Heart right ventricle (tissue), 16 donors: ENCODE measurements at regions of chr2 and their contacts with region 1.

Region 1: DNA sequence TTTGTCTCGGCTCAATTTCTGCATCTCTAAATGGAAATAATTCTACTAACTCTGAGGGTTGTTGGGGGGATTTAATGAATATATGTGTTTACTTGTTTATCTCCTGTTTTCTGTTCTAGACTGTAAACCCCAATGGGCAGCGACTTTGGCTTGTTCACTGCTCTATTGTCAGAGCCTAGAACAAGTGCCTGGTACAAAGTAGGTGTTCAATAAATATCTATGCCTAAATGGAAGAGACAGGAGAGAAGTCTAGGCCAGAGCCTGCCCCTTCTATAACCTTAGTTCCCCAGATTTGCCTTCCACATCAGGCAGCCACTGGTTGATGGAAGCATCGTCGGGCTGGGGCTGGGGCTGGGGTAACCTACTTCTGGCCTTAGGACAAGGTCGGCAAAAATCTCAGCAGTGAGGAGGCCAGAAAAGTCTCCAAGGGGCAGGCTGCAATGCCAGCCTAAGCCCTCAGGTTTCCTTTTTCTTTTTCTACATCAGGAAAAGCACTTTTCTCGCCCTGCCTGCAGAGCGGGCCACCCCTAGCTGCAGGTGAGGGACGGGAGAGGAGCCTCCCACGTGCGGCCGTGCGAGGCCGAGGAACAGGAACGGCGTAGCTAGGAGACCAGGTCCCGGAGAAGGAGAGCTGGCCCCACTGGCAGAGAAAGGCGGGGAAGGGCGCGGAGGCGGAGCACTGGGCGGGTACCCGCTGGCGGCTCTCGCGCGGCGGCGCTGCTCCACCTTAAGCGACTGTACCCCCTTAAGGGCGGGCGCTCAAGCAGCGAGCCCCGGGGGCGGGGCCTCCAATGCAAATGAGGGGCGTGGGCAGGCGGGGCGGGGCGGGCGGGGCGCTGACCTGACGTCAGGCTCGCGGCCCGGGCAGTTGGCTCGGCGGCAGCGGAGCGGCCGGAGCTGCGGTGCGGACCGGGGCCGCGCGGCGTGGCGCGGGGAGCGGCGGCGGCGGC is at the start of gene CNNM4:
- DNase-seq: peak; percentile 92 to 95
- ATAC-seq: peak; percentile 93 to 96 (median 96)
- H3K4me3 ChIP-seq: peak within 1 kb of the TSS; percentile 57 to 88 (median 68)
- H3K27ac ChIP-seq: peak within 1 kb of the TSS; percentile 31 to 85 (median 80)
- H3K4me1 ChIP-seq: peaks cover 8 to 46% (median 42%) of the 10 kb centered on the region in 9 donors
- H3K27me3 ChIP-seq: no peaks in the 10 kb centered on the region
- CTCF ChIP-seq: peak in 1 of 9 donors; percentile 14
- total RNA-seq, gene CNNM4: 19.1 to 59.7 (median 34.8) TPM

Region 2: DNA sequence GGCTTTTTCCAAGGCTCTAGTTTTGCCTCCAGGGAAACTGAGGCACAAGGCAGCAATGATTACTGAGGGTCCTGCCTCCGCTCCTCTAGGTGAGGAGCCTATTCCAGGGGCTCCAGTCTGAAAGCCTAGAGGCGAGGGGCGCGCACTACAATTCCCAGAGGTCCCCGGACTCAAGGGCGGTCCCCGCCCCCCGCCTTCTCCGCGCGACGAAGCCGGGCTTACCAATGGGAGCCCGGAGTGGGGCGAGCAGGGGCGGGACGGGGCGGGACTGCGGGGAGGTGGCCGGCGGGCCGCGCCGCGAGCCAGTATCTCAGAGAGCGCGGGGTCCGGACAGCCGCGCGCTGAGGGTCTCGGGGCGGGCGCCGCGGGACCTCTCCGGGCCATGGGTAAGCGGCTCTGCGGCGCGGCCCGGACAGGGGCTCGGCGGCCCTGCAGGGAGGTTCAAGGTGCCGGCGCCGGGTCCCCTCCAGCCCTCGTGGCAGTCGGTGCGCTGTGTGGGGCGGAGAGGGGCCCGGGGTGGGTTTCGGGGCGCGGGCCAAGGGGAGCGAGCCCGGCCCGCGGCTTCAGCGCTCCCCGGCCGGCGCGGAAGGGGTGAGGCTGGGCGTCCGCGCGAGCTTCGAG is 223.8 kb before region 1 on chr2 and contains the start of gene ARID5A:
- intact Hi-C with region 1: loop called in 1 of 10 experiments (anchors 10 kb)
- DNase-seq: peak; percentile 95 to 96
- ATAC-seq: peak; percentile 69 to 88 (median 76)
- H3K4me3 ChIP-seq: peak within 1 kb of the TSS; percentile 73 to 99 (median 96)
- H3K27ac ChIP-seq: peak within 1 kb of the TSS; percentile 68 to 100 (median 97)
- H3K4me1 ChIP-seq: peaks cover 29 to 89% (median 76%) of the 10 kb centered on the region in 9 donors
- H3K27me3 ChIP-seq: no peaks in the 10 kb centered on the region
- CTCF ChIP-seq: peak; percentile 13 to 59 (median 42)
- total RNA-seq, gene ARID5A: 12.0 to 121 (median 43.5) TPM

Region 3: DNA sequence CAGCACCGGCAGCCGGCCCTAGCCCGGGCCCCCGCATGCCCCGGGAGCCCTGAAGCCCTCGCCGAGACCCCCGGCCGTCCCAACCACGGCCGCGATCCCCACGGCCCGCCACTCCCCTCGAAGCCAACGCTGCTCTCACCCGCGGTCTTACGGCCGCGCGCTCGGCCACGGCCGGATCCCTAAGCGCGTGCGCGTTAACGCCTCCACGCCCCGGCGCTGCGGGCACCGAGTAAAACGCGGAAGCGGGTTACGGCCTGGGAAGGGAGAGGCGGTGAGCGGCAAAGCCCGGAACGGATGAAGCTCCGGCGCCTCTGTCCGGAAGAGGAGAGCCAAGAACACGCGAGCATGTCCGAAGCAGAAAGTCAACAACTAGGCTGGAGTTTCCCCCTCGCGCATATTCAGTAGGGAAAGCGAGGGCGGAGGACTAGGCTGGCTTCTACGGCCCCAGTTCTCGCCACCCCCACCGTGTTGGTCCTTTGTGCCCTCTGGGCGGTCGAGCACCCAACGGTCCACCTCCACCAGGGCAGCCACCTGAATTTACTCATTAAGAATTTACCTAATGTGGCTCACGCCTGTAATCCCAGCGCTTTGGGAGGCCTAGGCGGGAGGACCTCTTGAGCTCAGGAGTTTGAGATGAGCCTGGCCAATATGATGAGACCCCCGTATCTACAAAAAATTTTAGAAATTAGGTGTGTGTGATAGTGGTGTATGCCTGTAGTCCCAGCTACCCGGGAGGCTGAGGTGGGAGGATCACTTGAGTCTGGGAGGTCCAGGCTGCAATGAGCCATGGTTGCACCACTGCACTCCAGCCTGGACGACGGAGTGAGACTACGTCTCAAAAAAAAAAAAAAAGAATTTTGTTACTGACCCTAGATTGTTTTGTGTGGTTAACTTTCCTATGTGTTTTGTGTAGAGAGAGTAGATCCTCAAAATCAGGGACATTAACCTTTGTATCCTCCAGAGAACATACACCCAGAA is 121.9 kb before region 1 on chr2 and contains the start of gene KANSL3:
- intact Hi-C with region 1: loop called in 5 of 10 experiments (anchors 1 to 10 kb)
- DNase-seq: peak; percentile 89 to 91
- ATAC-seq: peak; percentile 84 to 92 (median 90)
- H3K4me3 ChIP-seq: peak within 1 kb of the TSS; percentile 60 to 90 (median 74)
- H3K27ac ChIP-seq: peak within 1 kb of the TSS; percentile 88 to 98 (median 94)
- H3K4me1 ChIP-seq: peaks cover 0 to 52% (median 36%) of the 10 kb centered on the region in 9 donors
- H3K27me3 ChIP-seq: no peaks in the 10 kb centered on the region
- CTCF ChIP-seq: no peak
- total RNA-seq, gene KANSL3: 25.4 to 38.1 (median 31.7) TPM

Region 4: DNA sequence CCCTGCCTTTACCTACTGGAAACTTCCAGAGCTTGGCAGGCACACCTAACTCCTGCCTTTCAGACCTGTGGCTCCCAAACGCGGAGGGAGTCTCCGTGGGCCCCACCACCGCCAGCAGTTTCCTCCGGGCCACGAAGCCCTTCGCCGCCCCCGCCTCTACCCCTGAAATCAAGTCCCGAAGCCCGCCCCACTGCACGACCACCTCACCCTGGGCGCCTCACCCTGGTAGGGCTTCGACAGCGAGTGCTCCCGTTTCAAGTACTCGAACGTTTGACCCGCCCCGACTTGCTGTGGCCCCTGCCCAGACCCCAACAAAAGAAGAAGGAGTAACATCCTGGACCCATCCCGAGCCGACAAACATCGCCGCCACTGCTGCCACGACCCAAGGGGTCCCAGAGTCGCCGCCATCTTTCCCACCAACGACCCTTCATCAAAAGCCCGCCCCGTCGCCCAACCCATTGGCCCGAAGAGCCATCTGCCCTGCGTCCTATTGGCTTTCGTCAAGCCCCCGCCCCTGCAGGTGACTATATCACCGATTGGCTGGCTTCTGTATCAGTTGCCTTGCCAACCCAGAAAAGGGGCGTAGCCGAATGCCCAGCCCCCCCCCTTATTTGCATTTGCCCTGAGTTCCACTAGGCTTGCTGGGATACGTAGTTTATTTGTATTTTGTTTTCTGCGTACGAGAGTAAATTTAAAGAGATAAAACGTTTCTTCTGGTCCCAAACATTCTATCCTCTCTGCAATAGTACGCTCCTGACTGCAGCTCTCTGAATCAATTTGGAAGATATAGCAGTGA is 20.5 kb before region 1 on chr2 and contains the start of gene LMAN2L:
- intact Hi-C with region 1: loop called in 3 of 10 experiments (anchors 1 to 2 kb)
- DNase-seq: peak; percentile 95 to 99
- ATAC-seq: peak; percentile 96 to 100 (median 100)
- H3K4me3 ChIP-seq: peak within 1 kb of the TSS; percentile 69 to 93 (median 80)
- H3K27ac ChIP-seq: peak within 1 kb of the TSS; percentile 34 to 84 (median 76)
- H3K4me1 ChIP-seq: peaks cover 0 to 49% (median 28%) of the 10 kb centered on the region in 9 donors
- H3K27me3 ChIP-seq: no peaks in the 10 kb centered on the region
- CTCF ChIP-seq: peak in 1 of 9 donors; percentile 15
- total RNA-seq, gene LMAN2L: 13.3 to 30.9 (median 18.8) TPM

Region 5: DNA sequence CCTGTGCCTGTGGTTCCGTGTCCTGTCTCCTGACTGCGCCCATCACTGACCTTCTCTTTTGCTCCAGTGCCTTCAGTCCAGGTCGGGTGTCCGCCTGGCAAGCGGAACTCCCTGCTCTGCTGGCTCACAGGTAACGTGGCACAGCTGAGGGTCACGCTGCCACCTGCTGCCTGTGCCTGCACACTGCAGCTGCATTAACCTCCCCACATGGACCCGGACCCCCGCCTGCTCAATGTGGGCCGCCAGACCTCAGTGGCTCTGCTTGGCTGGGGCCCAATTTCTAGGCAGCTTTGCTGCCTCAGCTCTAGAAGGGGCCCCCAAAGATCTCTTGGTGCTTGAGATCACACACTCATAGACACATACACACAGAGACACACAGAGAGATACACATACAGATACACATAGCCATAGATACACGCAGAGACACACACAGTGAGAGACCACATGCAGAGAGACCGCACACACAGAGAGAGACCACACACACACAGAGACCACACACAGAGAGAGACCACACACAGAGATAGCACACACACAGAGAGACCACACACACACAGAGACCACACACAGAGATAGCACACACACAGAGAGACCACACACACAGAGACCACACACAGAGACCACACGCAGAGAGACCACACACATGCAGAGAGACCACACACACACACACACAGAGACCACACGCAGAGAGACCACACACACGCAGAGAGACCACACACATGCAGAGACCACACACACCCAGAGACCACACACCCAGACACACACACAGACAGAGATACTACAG is 40.9 kb after region 1 on chr2:
- intact Hi-C with region 1: loop called in 4 of 10 experiments (anchors 5 kb)
- DNase-seq: peak; percentile 64 to 75
- ATAC-seq: peak; percentile 85 to 92 (median 90)
- H3K4me3 ChIP-seq: no peak overlapping the region
- H3K27ac ChIP-seq: peak overlapping the region in 1 of 10 donors; percentile 10
- H3K4me1 ChIP-seq: peaks cover 0 to 6% (median 4%) of the 10 kb centered on the region in 9 donors
- H3K27me3 ChIP-seq: no peaks in the 10 kb centered on the region
- CTCF ChIP-seq: peak; percentile 67 to 88 (median 83)

Region 6: GRCh38 chr2:96816128-96816835 is 56.0 kb after region 1 on chr2 and contains the start of gene CNNM3:
- intact Hi-C with region 1: loop called in 1 of 10 experiments (anchors 5 kb)
- DNase-seq: peak; percentile 97 to 98
- ATAC-seq: peak; percentile 94 to 98 (median 96)
- H3K4me3 ChIP-seq: peak within 1 kb of the TSS; percentile 27 to 96 (median 84)
- H3K27ac ChIP-seq: peak within 1 kb of the TSS; percentile 92 to 97 (median 96)
- H3K4me1 ChIP-seq: peaks cover 27 to 71% (median 61%) of the 10 kb centered on the region in 9 donors
- H3K27me3 ChIP-seq: no peaks in the 10 kb centered on the region
- CTCF ChIP-seq: peak; percentile 46 to 91 (median 80)
- total RNA-seq, gene CNNM3: 7.4 to 18.3 (median 13.8) TPM

Region 7: DNA sequence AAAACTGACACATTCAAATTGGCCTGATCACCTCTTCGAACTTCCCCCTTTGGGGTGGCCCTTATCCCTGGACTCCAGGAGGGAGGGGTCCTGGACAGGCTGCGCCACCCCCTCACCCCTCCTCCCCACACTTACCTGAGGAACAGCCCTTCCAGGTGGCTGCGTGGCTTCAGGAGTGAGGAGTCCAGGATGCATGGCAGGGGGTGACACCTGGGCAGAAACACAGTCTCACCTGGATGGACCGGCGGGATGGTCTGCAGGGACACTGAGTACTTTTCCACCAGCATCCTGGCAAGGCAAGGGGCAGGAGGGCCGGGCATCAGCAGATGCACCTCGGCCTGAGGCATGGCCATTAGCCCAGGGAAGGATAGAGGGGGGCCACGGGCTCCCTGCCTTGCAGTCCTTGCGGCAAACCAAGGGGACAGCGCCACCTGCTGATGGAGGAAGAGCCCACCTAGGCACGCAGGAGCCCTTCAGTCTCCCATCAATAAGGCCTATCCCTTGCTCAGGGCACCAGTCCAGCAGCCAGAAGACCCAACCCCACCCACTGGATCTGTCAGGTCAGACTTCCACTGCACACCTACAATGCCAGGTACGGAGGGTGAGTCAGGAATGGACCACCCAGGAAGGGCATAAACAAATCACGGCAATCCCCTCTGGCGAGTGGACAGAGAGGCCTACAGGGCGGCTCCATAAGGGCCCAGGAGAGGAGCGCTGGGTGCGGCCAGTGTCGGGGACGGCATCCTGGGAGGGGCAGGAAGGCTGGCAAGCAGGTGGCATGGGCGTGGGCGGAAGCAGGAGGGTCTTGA is 200.0 kb after region 1 on chr2:
- intact Hi-C with region 1: loop called in 1 of 10 experiments (anchors 10 kb)
- DNase-seq: peak; percentile 91 to 92
- ATAC-seq: peak; percentile 93 to 98 (median 96)
- H3K4me3 ChIP-seq: no peak overlapping the region
- H3K27ac ChIP-seq: no peak overlapping the region
- H3K4me1 ChIP-seq: peaks cover 0 to 11% (median 0%) of the 10 kb centered on the region in 9 donors
- H3K27me3 ChIP-seq: no peaks in the 10 kb centered on the region
- CTCF ChIP-seq: peak; percentile 87 to 97 (median 92)